ENCODE measurements at regions of chr3 and their contacts with region 1.

Region 1: GRCh38 chr3:15268033-15268631 is 62.1 kb downstream of the CAPN7 start:
- DNase-seq: peak; percentile 65
- ATAC-seq: peak; percentile 77
- H3K4me3 ChIP-seq: no peak overlapping the region
- H3K27ac ChIP-seq: no peak overlapping the region
- H3K4me1 ChIP-seq: peaks cover 13 to 29% of the 10 kb centered on the region in 2 experiments
- H3K27me3 ChIP-seq: no peaks in the 10 kb centered on the region
- CTCF ChIP-seq: peak; percentile 95 to 97 (median 96)
- POLR2A ChIP-seq: no peak
- RAD21 ChIP-seq: peak; percentile 99

Region 2: GRCh38 chr3:14976317-14976716 is 291.8 kb before region 1 on chr3:
- CTCF ChIA-PET with region 1: no interaction called
- POLR2A ChIA-PET with region 1: no interaction called
- RAD21 ChIA-PET with region 1: no interaction called
- intact Hi-C with region 1: no loop called
- DNase-seq: no peak
- ATAC-seq: no peak
- H3K4me3 ChIP-seq: no peak overlapping the region
- H3K27ac ChIP-seq: no peak overlapping the region
- H3K4me1 ChIP-seq: no peaks in the 10 kb centered on the region
- H3K27me3 ChIP-seq: no peaks in the 10 kb centered on the region
- CTCF ChIP-seq: no peak
- POLR2A ChIP-seq: no peak
- RAD21 ChIP-seq: no peak

Region 3: GRCh38 chr3:15007681-15008141 is 260.4 kb before region 1 on chr3:
- CTCF ChIA-PET with region 1: no interaction called
- POLR2A ChIA-PET with region 1: no interaction called
- RAD21 ChIA-PET with region 1: no interaction called
- intact Hi-C with region 1: no loop called
- DNase-seq: no peak
- ATAC-seq: no peak
- H3K4me3 ChIP-seq: no peak overlapping the region
- H3K27ac ChIP-seq: no peak overlapping the region
- H3K4me1 ChIP-seq: no peaks in the 10 kb centered on the region
- H3K27me3 ChIP-seq: no peaks in the 10 kb centered on the region
- CTCF ChIP-seq: no peak
- POLR2A ChIP-seq: no peak
- RAD21 ChIP-seq: no peak

Region 4: GRCh38 chr3:15332405-15333098 is 64.4 kb after region 1 on chr3 and contains the start of gene SH3BP5:
- CTCF ChIA-PET with region 1: interaction called, 17 read pairs
- POLR2A ChIA-PET with region 1: interaction called, 3 read pairs
- RAD21 ChIA-PET with region 1: interaction called, 4 to 6 read pairs
- intact Hi-C with region 1: loop called (anchors 2 kb)
- DNase-seq: peak; percentile 26
- ATAC-seq: peak; percentile 93
- H3K4me3 ChIP-seq: peak within 1 kb of the TSS; percentile 89 to 92
- H3K27ac ChIP-seq: peak within 1 kb of the TSS; percentile 59; the same call in 1 of the 2 replicates
- H3K4me1 ChIP-seq: peaks cover 8 to 33% of the 10 kb centered on the region in 2 experiments
- H3K27me3 ChIP-seq: no peaks in the 10 kb centered on the region
- CTCF ChIP-seq: peak in 2 of 3 experiments; percentile 46 to 62; a peak in 4 of 6 replicates
- POLR2A ChIP-seq: peak; percentile 45
- RAD21 ChIP-seq: peak; percentile 49; the same call in 1 of the 2 replicates
- total RNA-seq, gene SH3BP5: 13.9 TPM

Region 5: GRCh38 chr3:15377961-15378791 is 110.0 kb after region 1 on chr3:
- CTCF ChIA-PET with region 1: interaction called, 9 read pairs
- POLR2A ChIA-PET with region 1: interaction called, 3 read pairs
- RAD21 ChIA-PET with region 1: no interaction called
- intact Hi-C with region 1: loop called (anchors 1 kb)
- DNase-seq: peak; percentile 91
- ATAC-seq: peak; percentile 97
- H3K4me3 ChIP-seq: no peak overlapping the region
- H3K27ac ChIP-seq: peak overlapping the region; percentile 39; the same call in 1 of the 2 replicates
- H3K4me1 ChIP-seq: peaks cover 0 to 11% of the 10 kb centered on the region in 2 experiments; a peak in 2 of 4 replicates
- H3K27me3 ChIP-seq: no peaks in the 10 kb centered on the region
- CTCF ChIP-seq: peak; percentile 91 to 92 (median 91)
- POLR2A ChIP-seq: no peak
- RAD21 ChIP-seq: peak; percentile 98

Region 6: GRCh38 chr3:15399970-15400369 is 131.8 kb after region 1 on chr3:
- CTCF ChIA-PET with region 1: interaction called, 72 read pairs
- POLR2A ChIA-PET with region 1: no interaction called
- RAD21 ChIA-PET with region 1: interaction called, 9 read pairs
- intact Hi-C with region 1: loop called (anchors 2 kb)
- DNase-seq: no peak
- ATAC-seq: no peak
- H3K4me3 ChIP-seq: no peak overlapping the region
- H3K27ac ChIP-seq: no peak overlapping the region
- H3K4me1 ChIP-seq: peaks cover 0 to 5% of the 10 kb centered on the region in 2 experiments; a peak in 1 of 4 replicates
- H3K27me3 ChIP-seq: no peaks in the 10 kb centered on the region
- CTCF ChIP-seq: no peak
- POLR2A ChIP-seq: no peak
- RAD21 ChIP-seq: no peak

Region 7: DNA sequence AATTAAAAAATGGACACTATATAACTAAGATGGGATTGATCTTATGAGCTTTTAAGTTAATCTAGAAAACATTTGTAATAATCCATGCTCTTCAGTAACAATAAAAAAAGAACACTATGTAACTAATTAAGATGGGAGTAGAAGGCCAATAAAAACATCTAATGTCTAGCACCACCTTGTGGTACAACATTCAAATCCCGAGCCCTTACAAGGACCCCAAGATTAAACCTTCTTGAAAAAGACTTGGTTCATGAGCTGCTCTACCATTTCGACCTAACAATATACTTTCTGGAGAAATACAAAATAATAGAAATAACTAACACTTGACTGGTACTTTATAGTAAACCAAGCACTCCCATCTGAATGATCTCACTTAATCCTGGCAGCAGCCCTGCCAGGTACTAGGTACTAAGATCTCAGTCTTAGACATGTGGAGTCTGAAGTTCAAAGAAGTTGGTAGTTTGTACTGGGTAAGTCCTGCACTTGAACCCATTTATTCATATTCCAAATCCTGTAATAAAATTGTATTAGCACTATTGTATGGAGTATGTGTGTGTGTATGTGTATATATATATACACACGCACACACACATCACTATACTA is 137.4 kb after region 1 on chr3:
- CTCF ChIA-PET with region 1: interaction called, 72 read pairs
- POLR2A ChIA-PET with region 1: no interaction called
- RAD21 ChIA-PET with region 1: interaction called, 9 read pairs
- intact Hi-C with region 1: loop called (anchors 2 kb)
- DNase-seq: peak; percentile 48
- ATAC-seq: peak; percentile 81
- H3K4me3 ChIP-seq: no peak overlapping the region
- H3K27ac ChIP-seq: no peak overlapping the region
- H3K4me1 ChIP-seq: peaks cover 0 to 5% of the 10 kb centered on the region in 2 experiments; a peak in 1 of 4 replicates
- H3K27me3 ChIP-seq: no peaks in the 10 kb centered on the region
- CTCF ChIP-seq: peak; percentile 55 to 74 (median 69)
- POLR2A ChIP-seq: no peak
- RAD21 ChIP-seq: peak; percentile 74

Region 8: DNA sequence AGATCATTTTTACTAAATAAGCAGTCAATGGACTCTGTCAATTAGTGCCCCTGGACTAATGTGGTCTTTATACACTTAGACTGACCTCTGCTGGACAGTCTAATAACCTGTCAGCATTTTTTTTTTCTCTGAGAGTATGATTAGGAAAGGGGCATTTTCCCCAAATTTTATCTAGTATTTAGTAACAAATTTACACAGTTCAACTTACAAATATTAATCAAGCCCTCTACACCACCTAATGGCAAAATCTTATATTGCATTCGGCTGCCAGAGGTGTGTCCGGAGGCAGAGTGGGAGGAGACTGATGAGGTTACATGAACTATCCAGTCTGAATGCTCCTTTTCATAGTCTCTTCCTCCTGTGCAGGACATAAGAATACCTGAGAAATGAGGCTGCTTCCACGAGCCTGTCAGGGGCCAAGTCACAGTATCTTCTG is 289.4 kb after region 1 on chr3:
- CTCF ChIA-PET with region 1: no interaction called
- POLR2A ChIA-PET with region 1: no interaction called
- RAD21 ChIA-PET with region 1: no interaction called
- intact Hi-C with region 1: loop called (anchors 2 kb)
- DNase-seq: peak; percentile 82
- ATAC-seq: peak; percentile 100
- H3K4me3 ChIP-seq: no peak overlapping the region
- H3K27ac ChIP-seq: peak overlapping the region; percentile 21; the same call in 1 of the 2 replicates
- H3K4me1 ChIP-seq: peaks cover 4 to 6% of the 10 kb centered on the region in 2 experiments; a peak in 3 of 4 replicates
- H3K27me3 ChIP-seq: no peaks in the 10 kb centered on the region
- CTCF ChIP-seq: peak; percentile 47 to 71 (median 62); a peak in 4 of 6 replicates
- POLR2A ChIP-seq: no peak
- RAD21 ChIP-seq: peak; percentile 67